Activated CD8-positive, alpha-beta memory T cell treated with anti-CD3 and anti-CD28 coated beads, Interleukin-2, amount 10 ng/mL, durations not matched to agents 7 days and 5 days (primary cell): ENCODE measurements at regions of chr2 and their contacts with region 1.

Region 1: DNA sequence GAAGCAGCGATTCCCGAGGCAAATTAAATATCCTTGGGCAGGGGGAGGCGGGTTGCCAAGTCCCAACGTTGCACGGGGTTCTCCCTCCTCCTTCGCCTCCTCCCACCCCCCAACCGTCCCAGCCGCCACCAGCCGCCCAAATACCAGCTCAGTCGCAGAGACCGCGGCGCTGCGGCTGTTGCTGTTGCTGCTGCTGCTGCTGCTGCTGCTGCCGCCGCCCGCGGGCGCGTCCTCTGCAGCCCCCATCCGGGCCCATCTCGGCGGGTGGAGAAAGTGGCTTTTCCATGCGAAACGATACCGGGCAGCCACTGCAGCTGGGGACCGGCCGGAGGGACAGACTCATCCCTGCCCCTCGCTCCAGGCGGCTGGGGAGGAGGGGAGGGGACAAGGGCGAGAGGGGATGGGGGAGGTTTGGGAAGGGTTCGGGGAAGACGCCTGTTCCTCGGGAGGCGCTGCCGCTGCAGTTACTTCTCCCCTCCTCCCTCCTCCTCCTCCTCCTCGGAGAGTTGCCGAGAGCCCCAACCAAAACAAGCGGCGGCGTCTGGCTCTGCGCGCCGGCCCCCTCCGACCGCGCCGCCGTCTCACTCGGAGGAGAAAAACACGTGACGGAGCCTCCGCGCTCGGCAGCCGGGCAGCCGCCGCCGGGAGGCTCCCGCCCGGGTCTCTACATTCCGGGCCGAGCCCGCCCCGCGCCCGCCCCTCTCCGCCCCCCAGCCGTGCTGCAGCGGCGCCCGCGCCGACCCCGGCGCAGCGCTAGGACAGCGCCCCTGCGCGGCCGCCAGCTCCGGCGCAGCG is at the start of gene IRS1:
- DNase-seq: peak; percentile 73
- ATAC-seq: peak; percentile 63
- H3K4me3 Mint-ChIP-seq: peak within 1 kb of the TSS; percentile 86
- H3K27ac Mint-ChIP-seq: peak within 1 kb of the TSS; percentile 83
- H3K4me1 Mint-ChIP-seq: peaks cover 36% of the 10 kb centered on the region
- H3K27me3 Mint-ChIP-seq: peaks cover 7% of the 10 kb centered on the region
- total RNA-seq, gene IRS1: 4.5 to 5.8 TPM

Region 2: DNA sequence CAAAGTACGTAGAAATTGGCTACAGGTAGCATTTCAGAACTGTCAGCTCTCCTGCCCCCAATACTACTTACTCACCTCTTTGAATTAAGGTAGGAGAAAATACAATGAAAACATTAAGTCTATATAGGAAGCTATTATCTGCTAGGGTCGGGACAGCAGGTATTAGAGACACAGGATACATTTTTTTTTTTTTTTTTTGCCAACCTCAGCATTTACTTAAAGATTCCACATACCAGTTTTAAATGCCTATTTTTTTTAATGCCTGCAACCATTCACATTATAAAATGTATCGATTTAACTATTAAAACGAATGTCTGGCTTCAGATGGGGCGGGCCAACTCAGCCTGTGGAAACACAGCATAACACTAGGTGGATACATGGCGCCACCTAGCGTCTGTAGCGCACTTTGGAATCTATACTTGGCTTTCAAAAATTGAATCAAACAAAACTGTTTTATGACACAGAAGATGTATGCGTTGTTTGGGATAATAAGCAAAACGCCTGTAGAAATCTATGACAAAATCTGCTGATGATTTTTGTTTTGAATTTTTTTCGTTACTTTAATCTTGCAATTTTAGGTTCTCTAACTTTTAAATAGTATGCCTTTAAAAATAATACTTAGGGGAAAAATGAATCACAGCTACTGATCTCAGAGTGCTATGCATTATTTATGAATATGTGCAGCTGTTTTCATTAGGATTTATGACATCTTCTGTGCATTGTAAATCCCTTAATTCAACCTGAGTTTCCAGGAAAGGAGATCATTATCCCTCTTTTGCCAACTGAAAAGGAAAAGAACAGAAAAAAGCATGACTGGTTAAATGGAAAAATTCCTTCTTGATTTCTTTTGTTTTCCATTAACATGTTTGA is 1138.9 kb before region 1 on chr2:
- CTCF ChIA-PET with region 1: interaction called, 10 read pairs
- DNase-seq: peak; percentile 82
- ATAC-seq: peak; percentile 77
- H3K4me3 Mint-ChIP-seq: no peak overlapping the region
- H3K27ac Mint-ChIP-seq: no peak overlapping the region
- H3K4me1 Mint-ChIP-seq: peaks cover 3% of the 10 kb centered on the region
- H3K27me3 Mint-ChIP-seq: peaks cover 18% of the 10 kb centered on the region

Region 3: GRCh38 chr2:226215902-226216503 is 583.4 kb before region 1 on chr2:
- CTCF ChIA-PET with region 1: interaction called, 44 read pairs
- DNase-seq: peak; percentile 58
- ATAC-seq: peak; percentile 78
- H3K4me3 Mint-ChIP-seq: no peak overlapping the region
- H3K27ac Mint-ChIP-seq: no peak overlapping the region
- H3K4me1 Mint-ChIP-seq: no peaks in the 10 kb centered on the region
- H3K27me3 Mint-ChIP-seq: no peaks in the 10 kb centered on the region

Region 4: DNA sequence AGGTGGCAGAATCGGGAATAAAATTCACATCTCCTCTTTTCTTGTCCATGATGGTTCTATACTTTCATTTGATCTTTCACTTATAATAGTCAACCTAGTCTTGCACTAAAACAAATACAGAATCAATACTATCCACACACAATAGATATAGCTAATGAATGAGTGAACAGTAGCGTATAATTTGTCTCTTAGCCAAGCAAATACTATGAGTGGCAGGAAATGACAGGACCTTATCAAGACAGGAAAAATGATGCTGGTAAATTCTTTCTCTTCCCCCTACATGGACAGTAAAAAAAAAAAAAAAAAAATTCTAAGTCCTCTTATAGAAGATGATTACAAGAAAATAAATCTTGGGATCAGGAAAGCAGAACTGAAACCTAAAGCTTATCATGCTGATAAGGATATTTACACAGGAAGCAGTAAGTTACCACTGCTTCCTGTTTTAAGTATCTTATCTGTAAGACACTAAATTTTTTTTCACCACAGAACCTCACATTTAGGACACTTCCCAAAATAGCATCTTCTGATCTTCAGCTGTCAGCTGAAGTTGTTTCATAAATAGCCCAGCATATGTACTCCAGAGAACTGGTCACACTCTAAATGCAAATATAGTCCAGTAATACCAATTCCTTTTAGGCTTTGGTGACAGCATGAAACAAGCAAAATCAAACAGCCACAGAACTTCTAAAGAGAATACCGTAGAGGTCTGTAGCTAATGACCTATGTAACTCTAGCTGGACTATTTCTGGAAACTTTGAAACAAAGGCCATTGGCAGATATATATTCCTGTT is 26.8 kb before region 1 on chr2:
- CTCF ChIA-PET with region 1: interaction called, 12 read pairs
- DNase-seq: no peak
- ATAC-seq: peak; percentile 84
- H3K4me3 Mint-ChIP-seq: peak overlapping the region; percentile 42
- H3K27ac Mint-ChIP-seq: peak overlapping the region; percentile 79
- H3K4me1 Mint-ChIP-seq: peaks cover 23% of the 10 kb centered on the region
- H3K27me3 Mint-ChIP-seq: no peaks in the 10 kb centered on the region

Region 5: GRCh38 chr2:226835796-226836547 is 36.6 kb after region 1 on chr2 and contains the start of gene RHBDD1:
- CTCF ChIA-PET with region 1: interaction called, 15 read pairs
- DNase-seq: peak; percentile 96
- ATAC-seq: peak; percentile 91
- H3K4me3 Mint-ChIP-seq: peak within 1 kb of the TSS; percentile 86
- H3K27ac Mint-ChIP-seq: peak within 1 kb of the TSS; percentile 99
- H3K4me1 Mint-ChIP-seq: peaks cover 43% of the 10 kb centered on the region
- H3K27me3 Mint-ChIP-seq: no peaks in the 10 kb centered on the region
- total RNA-seq, gene RHBDD1: 29.8 to 32.2 TPM